ENCODE measurements at regions of chr5 and their contacts with region 1.

Region 1: DNA sequence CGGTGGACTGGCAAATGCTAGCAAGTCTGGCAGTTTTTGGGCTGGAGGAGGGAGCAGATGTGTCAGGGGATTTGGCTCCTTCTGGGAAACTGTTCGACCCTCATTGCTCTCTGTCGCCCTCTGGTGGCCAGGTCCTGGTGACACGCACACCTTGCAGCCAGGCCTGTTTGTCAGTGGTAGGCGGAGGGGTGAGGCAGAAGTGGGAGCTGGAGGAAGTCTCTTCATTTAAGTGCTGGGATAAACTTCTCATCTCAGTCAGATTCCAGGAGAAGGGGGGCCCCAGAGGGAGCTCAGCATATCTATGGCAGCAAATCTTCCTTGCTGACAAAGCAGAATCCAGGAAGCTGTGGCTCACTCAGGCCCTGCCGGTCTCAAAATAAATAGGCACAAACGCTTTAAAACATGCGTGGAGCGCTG is 326.5 kb downstream of the ZSWIM6 start:
- DNase-seq: peak; percentile 38
- H3K4me3 ChIP-seq: no peak overlapping the region
- H3K27ac ChIP-seq: no peak overlapping the region
- H3K27me3 ChIP-seq: peaks cover 13% of the 10 kb centered on the region
- CTCF ChIP-seq: peak; percentile 94

Region 2: DNA sequence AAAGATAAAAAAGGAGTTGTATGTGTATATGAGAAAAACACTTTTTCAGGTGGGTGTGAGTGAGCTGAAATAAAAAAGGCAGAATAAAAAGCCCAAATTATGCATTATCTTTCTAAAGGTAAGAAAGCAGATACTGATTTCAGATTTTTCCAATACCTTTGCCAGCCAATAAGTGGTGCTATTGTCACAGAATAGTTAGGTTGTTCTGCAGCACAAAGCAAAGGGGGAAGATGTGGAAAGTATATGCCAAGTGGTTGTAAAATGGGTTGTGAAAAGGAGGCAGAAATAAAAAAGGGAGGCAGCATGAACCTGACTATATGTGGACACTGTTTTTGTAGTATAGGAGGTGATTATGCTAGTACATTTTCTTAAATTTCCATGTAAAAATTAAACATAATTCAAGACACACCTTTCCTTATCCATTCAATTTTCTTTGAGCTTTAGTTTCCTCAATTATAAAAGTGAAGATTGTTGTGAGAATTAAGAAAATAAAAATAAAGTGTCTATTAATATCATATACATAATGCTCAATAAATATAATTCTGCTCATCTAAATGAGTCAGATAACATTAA is 603.1 kb before region 1 on chr5:
- CTCF ChIA-PET with region 1: interaction called, 47 read pairs
- POLR2A ChIA-PET with region 1: no interaction called
- DNase-seq: no peak
- H3K4me3 ChIP-seq: no peak overlapping the region
- H3K27ac ChIP-seq: no peak overlapping the region
- H3K27me3 ChIP-seq: no peaks in the 10 kb centered on the region
- CTCF ChIP-seq: peak; percentile 81

Region 3: DNA sequence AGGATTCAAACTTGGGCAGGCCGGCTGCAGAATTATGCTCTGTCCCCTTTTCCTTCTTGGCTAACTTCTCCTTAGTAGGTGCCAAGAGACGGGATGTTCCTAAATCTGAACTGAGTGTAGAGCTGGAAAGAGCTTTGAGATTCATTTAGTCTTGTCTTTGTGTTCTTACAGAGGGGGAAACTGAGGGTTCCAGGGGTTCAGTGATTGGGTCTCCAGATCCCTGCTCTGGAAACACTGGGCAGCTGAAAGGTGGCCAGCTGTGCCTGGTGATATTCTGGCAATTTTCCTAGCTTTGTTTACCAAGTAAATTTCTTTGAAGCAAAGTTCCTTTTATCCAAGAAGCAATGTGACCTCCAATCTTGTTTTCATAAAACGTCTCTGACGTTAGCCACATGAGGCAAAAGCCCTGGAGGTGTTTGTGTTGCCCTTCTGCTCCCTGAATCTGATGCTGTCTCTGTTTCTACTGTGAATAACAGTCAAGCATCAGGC is 37.9 kb before region 1 on chr5:
- CTCF ChIA-PET with region 1: interaction called, 11 read pairs
- POLR2A ChIA-PET with region 1: no interaction called
- DNase-seq: no peak
- H3K4me3 ChIP-seq: no peak overlapping the region
- H3K27ac ChIP-seq: no peak overlapping the region
- H3K27me3 ChIP-seq: peaks cover 7% of the 10 kb centered on the region
- CTCF ChIP-seq: no peak

Region 4: DNA sequence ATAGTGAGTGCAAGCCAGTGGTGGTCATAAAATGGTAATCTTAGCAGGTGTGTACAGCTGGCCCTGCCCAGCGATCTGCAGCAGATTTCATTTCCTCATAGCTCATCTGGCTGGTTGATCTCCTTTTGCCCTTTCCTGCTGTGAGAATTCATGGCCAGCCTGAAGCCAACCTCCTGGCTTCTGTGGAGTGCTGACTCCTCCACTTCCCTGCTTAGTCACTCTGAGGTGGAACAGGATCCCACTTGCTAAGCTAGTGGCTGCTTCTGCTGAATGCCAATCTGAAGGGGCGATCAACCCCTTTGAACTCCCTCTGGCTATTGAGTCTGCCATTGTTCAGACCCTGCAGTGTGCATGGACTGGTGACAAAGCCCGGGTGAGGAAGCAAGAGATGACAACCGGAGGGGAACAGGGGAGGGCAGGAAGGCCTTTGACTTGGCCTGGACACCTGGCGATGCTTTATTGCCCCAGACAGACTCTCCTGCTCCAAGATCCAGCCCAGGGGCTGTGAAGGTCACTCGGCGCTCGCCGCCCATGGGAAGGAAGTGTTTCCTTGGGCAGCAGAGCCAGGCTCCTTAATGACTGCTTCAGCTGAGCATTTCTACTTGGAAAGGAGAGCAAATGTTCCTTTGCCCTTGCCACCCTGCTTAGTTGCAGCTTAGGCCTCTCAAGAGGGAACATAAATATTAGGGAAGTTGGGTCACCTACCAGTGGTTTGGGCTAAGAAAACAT is 14.6 kb after region 1 on chr5:
- CTCF ChIA-PET with region 1: interaction called, 13 read pairs
- POLR2A ChIA-PET with region 1: no interaction called
- DNase-seq: no peak
- H3K4me3 ChIP-seq: no peak overlapping the region
- H3K27ac ChIP-seq: no peak overlapping the region
- H3K27me3 ChIP-seq: peaks cover 25% of the 10 kb centered on the region
- CTCF ChIP-seq: no peak